SK-N-SH (cell line): ENCODE measurements at regions of chr7 and their contacts with region 1.

Region 1: GRCh38 chr7:55255496-55256435 is 109.4 kb upstream of the LANCL2 start:
- DNase-seq: peak; percentile 93
- H3K4me3 ChIP-seq: peak overlapping the region; percentile 56 to 67
- H3K27ac ChIP-seq: peak overlapping the region; percentile 50 to 58; a peak in 3 of 4 replicates
- H3K4me1 ChIP-seq: peaks cover 0 to 15% of the 10 kb centered on the region in 2 experiments; a peak in 1 of 4 replicates
- H3K27me3 ChIP-seq: no peaks in the 10 kb centered on the region
- CTCF ChIP-seq: peak; percentile 99
- EP300 ChIP-seq: no peak
- RAD21 ChIP-seq: peak; percentile 99

Region 2: GRCh38 chr7:54758702-54759592 is 496.8 kb before region 1 on chr7 and contains the start of gene SEC61G:
- CTCF ChIA-PET with region 1: interaction called, 1,068 read pairs
- POLR2A ChIA-PET with region 1: interaction called, 11 read pairs
- DNase-seq: peak; percentile 98
- H3K4me3 ChIP-seq: peak within 1 kb of the TSS; percentile 84 to 100
- H3K27ac ChIP-seq: peak within 1 kb of the TSS; percentile 82 to 97
- H3K4me1 ChIP-seq: peaks cover 7 to 15% of the 10 kb centered on the region in 2 experiments; a peak in 3 of 4 replicates
- H3K27me3 ChIP-seq: no peaks in the 10 kb centered on the region
- CTCF ChIP-seq: no peak
- EP300 ChIP-seq: no peak
- RAD21 ChIP-seq: no peak
- polyA plus RNA-seq, gene SEC61G: 229 and 314 TPM in 2 replicates

Region 3: DNA sequence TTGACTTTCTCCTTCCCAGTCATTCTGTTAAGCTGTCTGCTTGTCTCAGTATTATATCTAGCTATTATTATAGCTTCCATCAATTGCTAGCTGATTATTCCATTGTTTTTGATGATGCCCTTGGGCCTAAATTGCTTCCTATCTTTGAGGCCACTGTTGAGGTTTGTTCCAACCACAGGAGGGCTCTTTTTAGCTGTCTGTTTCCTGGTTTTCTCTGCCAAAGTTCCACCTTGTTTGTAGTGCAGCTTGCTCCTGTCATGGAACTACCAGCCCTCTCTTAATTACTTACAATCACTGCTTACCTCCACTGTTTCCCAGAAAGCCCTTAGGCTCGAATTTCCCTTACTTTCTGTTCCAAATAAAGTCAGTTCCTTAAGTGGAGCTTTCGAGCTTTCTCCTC is 378.1 kb before region 1 on chr7:
- CTCF ChIA-PET with region 1: interaction called, 32 read pairs
- POLR2A ChIA-PET with region 1: no interaction called
- DNase-seq: no peak
- H3K4me3 ChIP-seq: no peak overlapping the region
- H3K27ac ChIP-seq: no peak overlapping the region
- H3K4me1 ChIP-seq: peaks cover 0 to 6% of the 10 kb centered on the region in 2 experiments; a peak in 1 of 4 replicates
- H3K27me3 ChIP-seq: no peaks in the 10 kb centered on the region
- CTCF ChIP-seq: peak; percentile 32; the same call in 1 of the 2 replicates
- EP300 ChIP-seq: no peak
- RAD21 ChIP-seq: peak; percentile 55

Region 4: DNA sequence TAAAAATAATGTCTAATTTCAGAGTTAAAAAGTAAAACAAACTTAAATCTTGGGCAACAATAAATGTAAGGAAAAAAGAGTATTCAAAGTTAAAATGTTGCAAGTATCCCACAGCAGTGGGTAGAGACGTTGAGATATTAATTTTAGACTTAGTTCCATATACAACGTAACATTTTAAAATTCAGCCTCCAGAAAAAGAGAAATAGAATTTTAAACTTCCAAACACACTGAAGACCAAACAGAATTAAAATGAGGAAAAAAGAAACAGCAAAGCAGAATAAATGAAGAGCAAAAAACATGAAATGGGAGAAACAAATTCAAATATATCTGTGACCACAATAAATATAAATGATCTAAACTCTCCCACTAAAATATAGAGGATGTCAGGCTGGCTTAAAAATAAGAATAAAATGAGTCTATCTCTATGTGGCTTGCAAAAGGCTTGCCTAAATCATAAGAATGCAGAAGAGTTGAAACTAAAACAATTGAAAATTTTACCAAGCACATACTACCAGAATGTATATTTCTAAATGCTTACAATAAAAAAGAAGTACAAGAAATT is 283.0 kb before region 1 on chr7:
- CTCF ChIA-PET with region 1: interaction called, 16 read pairs
- POLR2A ChIA-PET with region 1: no interaction called
- DNase-seq: no peak
- H3K4me3 ChIP-seq: no peak overlapping the region
- H3K27ac ChIP-seq: no peak overlapping the region
- H3K4me1 ChIP-seq: peaks cover 0 to 3% of the 10 kb centered on the region in 2 experiments; a peak in 1 of 4 replicates
- H3K27me3 ChIP-seq: no peaks in the 10 kb centered on the region
- CTCF ChIP-seq: no peak
- EP300 ChIP-seq: no peak
- RAD21 ChIP-seq: no peak

Region 5: DNA sequence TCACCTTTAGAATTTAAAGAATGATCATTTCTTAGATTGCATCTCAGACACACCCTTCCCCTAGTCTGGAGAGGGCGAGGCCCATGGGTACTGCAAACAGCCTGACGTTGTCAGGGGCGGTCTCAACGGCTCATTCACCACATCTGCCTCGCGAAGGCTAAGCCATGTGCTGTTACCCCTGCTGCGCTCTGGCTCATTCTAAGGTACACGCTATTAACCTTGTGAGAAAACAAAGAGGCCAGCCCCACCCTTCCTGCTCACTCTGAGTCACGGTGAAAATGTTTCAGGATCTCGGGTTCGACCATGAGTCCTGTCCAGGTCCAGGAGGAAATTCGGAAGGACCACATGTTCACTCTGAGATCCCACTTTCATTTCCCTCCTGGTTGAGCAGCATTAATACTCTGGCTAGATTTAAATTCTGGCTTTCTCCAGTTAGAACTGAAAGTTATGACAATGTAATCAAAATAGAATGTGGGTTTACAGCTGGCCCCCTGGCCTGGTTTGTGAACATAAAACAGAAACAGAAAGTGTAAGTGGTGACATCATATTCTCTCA is 181.7 kb before region 1 on chr7:
- CTCF ChIA-PET with region 1: interaction called, 23 read pairs
- POLR2A ChIA-PET with region 1: no interaction called
- DNase-seq: no peak
- H3K4me3 ChIP-seq: peak overlapping the region; percentile 4 to 9; a peak in 1 of 4 replicates
- H3K27ac ChIP-seq: peak overlapping the region; percentile 28 to 63
- H3K4me1 ChIP-seq: peaks cover 18 to 45% of the 10 kb centered on the region in 2 experiments
- H3K27me3 ChIP-seq: no peaks in the 10 kb centered on the region
- CTCF ChIP-seq: no peak
- EP300 ChIP-seq: no peak
- RAD21 ChIP-seq: no peak

Region 6: GRCh38 chr7:55164527-55164926 is 91.2 kb before region 1 on chr7:
- CTCF ChIA-PET with region 1: interaction called, 18 read pairs
- POLR2A ChIA-PET with region 1: no interaction called
- DNase-seq: no peak
- H3K4me3 ChIP-seq: no peak overlapping the region
- H3K27ac ChIP-seq: no peak overlapping the region
- H3K4me1 ChIP-seq: no peaks in the 10 kb centered on the region
- H3K27me3 ChIP-seq: no peaks in the 10 kb centered on the region
- CTCF ChIP-seq: no peak
- EP300 ChIP-seq: no peak
- RAD21 ChIP-seq: no peak

Region 7: DNA sequence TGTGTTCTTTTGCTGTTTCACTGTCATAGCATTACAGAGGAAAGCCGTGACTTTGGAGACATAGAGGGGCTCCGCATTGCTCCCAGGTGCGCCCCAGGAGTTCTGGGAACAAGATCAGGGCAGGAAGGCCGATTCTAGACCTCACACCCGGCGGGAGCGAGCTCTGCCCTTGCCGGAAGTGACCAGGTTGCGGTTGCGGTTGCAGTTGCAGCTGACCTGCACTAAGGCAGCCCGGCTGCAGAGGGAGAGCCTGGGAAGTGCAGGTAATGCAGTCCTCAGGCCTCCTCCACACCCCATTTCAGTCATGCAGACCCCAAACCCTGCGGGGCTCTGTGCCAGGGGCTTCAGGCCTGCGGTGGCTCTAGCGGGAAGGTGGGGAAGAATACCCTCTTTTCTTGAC is 20.7 kb before region 1 on chr7:
- CTCF ChIA-PET with region 1: interaction called, 52 read pairs
- POLR2A ChIA-PET with region 1: no interaction called
- DNase-seq: no peak
- H3K4me3 ChIP-seq: no peak overlapping the region
- H3K27ac ChIP-seq: no peak overlapping the region
- H3K4me1 ChIP-seq: no peaks in the 10 kb centered on the region; a peak in 1 of 4 replicates
- H3K27me3 ChIP-seq: no peaks in the 10 kb centered on the region
- CTCF ChIP-seq: no peak
- EP300 ChIP-seq: no peak
- RAD21 ChIP-seq: no peak